HEK293 (cell line): ENCODE measurements at regions of chr20 and their contacts with region 1.

Region 1: GRCh38 chr20:11716239-11716944 is 201.3 kb upstream of the BTBD3 start:
- H3K4me3 ChIP-seq: no peak overlapping the region
- H3K27ac ChIP-seq: no peak overlapping the region
- H3K4me1 ChIP-seq: no peaks in the 10 kb centered on the region
- CTCF ChIP-seq: peak; percentile 37; the same call in 1 of the 2 replicates

Region 2: DNA sequence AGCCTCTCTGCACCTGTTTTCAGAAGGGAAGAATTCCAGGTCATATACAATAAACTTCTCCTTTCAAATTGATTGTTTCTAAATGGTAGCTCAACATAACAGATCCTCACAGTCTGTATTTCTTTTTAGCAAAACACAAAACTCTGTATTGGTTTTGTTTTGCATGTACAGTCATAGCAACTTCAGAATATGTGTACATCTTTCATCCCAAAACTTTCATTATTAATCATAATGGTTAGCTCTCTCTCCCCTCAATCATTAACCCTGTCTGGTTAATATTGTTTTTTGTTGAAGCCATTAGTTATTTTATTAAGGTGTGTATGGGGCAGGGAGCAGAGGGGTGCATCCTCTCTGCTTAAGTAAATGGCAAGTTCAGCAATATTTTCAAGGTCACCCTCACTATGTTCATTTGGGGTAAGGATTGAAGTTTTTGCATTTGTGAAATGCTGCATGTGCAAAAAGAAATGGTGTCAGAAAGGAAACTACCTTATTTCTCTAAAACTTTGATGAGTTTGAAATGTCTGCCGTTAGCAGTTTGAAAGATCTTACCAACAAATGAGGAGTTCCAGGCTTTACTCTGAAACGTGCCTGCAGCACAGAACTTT is 64.5 kb after region 1 on chr20:
- CTCF ChIA-PET with region 1: no interaction called
- POLR2A ChIA-PET with region 1: no interaction called
- H3K4me3 ChIP-seq: no peak overlapping the region
- H3K27ac ChIP-seq: no peak overlapping the region
- H3K4me1 ChIP-seq: no peaks in the 10 kb centered on the region
- CTCF ChIP-seq: no peak

Region 3: GRCh38 chr20:12383821-12384220 is 667.4 kb after region 1 on chr20:
- CTCF ChIA-PET with region 1: interaction called, 11 read pairs
- POLR2A ChIA-PET with region 1: no interaction called
- H3K4me3 ChIP-seq: no peak overlapping the region
- H3K27ac ChIP-seq: no peak overlapping the region
- H3K4me1 ChIP-seq: no peaks in the 10 kb centered on the region
- CTCF ChIP-seq: no peak